HEK293 (cell line): ENCODE measurements at regions of chr10 and their contacts with region 1.

Region 1: DNA sequence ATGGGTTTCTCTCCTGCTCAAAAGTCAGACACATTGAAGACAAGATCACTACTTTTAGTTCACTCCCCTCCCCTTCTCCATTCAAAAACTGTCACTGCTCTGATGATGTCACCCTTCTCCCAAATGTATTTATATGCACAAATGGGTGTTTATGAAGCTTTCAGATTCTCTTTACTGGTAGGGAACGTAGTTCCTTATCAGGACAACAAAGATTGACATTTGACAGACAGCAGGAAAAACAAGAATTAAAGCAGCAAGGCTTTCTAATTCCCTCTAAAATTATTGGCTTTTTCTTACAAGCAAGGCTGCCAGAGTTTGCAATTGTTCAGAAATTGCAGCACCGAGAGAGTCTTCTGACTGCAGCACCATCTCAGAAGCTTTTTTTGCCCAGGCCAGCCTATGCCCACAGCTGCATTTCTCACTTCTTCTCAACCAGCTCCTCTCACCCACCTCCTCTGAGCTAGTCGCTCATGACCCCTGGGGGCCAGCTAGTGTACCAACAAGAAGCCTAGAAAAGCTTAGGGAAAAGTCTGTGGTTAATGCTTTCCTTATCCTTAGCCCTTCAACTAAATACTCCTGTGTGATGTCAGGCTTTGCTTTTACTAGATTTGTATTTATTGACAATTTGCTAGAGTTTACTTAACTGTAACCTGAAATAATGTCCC is 265.1 kb downstream of the HTR7 start:
- H3K4me3 ChIP-seq: no peak overlapping the region
- H3K27ac ChIP-seq: no peak overlapping the region
- H3K4me1 ChIP-seq: peaks cover 27% of the 10 kb centered on the region
- CTCF ChIP-seq: peak; percentile 52; the same call in 1 of the 2 replicates

Region 2: DNA sequence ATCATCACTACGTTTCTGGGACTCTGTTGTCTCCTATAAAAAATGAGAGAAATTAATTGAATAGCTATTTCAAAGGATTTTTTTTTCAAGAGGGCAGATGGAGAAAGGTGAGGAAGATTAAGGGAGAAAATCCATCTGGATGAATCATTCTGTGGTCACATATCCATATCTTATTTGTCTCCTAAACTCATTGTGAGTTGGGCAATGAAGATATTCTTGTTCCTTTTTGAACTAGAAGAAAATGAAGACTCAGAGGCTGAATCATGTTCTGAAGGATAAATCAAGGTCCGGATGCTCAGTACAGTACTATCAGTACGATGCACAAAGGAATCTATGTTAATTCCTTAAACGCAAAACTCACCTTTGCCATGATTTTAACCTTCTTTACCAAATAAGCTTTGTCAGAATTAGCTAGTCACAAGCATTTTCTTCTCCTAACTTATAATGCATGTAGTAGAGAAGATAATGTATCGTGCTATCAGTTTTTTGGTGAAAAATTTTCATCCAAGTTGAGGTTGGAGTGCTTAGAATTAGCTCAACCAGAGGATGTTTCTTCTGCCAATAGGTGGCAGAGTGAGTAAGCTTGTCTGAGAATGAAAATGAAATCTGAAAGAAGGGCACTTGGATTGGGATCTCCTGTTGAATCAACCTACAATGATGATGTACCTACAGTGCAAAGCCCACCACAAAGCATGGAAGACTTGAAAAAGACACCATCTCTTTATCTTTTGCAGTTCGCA is 444.5 kb before region 1 on chr10:
- CTCF ChIA-PET with region 1: interaction called, 18 read pairs
- POLR2A ChIA-PET with region 1: no interaction called
- H3K4me3 ChIP-seq: no peak overlapping the region
- H3K27ac ChIP-seq: no peak overlapping the region
- H3K4me1 ChIP-seq: no peaks in the 10 kb centered on the region
- CTCF ChIP-seq: no peak

Region 3: DNA sequence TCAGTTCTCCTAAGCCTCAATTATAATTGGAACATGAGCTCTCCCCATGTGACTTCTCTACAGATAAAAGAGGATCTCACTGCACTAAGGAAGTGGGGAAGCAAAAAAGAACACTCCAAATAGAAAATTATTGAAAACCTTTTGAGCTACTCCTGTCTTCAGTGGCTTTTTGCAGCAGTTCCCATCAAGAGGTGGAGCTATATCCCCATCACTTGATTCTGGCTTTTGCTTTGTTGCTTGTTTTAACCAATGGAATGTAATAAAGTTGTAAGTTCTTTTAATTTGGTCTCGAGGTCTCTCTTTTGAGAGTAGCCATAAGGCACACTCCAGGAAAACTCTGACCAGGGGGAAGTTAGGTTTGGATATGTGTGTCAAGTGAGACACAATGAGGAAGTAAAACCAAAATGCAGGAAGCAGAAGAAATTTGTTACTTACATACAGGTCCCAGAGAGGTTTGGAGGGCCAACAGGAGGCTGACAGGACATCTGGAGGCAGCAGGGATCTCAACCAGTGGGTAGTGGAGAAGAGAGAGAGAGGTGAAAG is 304.3 kb before region 1 on chr10:
- CTCF ChIA-PET with region 1: interaction called, 19 read pairs
- POLR2A ChIA-PET with region 1: no interaction called
- H3K4me3 ChIP-seq: no peak overlapping the region
- H3K27ac ChIP-seq: no peak overlapping the region
- H3K4me1 ChIP-seq: 0 out of 2 replicates have a peak, but pooled peaks cover 5% of the 10 kb centered on the region
- CTCF ChIP-seq: no peak

Region 4: DNA sequence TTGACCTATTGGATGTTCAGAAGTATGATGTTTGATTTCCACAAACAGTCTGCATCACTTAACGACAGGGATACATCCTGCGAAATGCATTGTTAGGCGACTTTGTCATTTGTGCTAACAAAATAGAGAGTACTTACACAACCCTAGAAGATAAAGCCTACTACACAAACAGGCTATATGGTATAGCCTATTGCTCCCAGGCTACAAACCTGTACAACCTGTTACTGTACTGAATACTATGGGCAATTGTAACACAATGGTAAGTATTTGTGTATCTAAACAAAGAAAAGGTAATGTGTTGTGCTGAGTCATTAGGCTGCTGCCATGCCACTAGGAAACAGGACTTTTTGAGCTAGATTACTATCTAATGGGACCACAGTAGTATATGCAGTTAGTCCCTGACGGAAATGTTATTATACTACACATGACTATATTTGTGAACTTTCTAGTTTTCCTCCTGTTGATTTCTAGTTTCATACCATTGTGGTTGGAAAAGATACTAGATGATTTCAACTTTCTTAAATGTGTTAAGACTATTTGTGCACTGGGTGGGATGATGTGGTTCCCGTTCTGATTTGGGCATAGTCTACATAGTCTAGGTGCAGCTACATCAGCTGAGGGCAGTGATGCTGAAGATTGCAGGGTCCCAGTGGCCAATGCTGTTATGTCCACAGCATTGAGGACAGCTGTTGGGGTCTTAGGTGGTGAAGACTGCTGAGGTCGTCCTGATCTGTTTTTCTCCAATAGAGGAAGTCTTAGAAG is 103.3 kb after region 1 on chr10:
- CTCF ChIA-PET with region 1: no interaction called
- POLR2A ChIA-PET with region 1: no interaction called
- H3K4me3 ChIP-seq: no peak overlapping the region
- H3K27ac ChIP-seq: no peak overlapping the region
- H3K4me1 ChIP-seq: no peaks in the 10 kb centered on the region
- CTCF ChIP-seq: no peak